Activated T-helper 1 cell treated with anti-CD3 and anti-CD28 coated beads, Interleukin-12 subunit alpha, Interleukin-12 subunit beta, Interleukin-2, Interleukin-4 antibody, amounts not matched to agents 30 ng/mL and 10 ng/mL and 1 ng/mL, durations not matched to agents 14 hours and 24 hours and 36 hours (primary cell): ENCODE measurements at regions of chr20 and their contacts with region 1.

Region 1: DNA sequence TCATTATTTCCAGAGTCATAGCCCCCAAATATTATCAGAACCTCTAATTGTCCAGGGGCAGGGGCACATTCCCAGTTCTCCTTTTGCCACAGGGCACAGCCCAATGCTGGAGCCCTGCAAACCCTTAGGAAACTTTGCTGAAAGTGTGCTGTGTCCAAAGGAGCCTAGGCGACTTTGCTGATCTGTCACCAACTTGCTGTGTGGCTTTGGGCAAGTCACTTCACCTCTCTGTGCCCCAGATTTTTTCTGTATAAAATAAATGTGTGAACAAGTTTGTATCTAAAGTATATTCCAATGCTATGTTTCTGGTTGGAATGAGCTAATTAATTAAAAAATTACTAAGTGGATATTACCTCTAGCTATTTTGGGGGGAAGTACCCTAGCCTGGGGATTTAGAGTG is 25.4 kb upstream of the BCAS1 start:
- DNase-seq: no peak
- H3K4me3 Mint-ChIP-seq: no peak overlapping the region
- H3K27ac Mint-ChIP-seq: no peak overlapping the region
- H3K4me1 Mint-ChIP-seq: peaks cover 9% of the 10 kb centered on the region
- H3K27me3 Mint-ChIP-seq: peaks cover 13% of the 10 kb centered on the region

Region 2: GRCh38 chr20:54199721-54200176 is 103.9 kb after region 1 on chr20:
- intact Hi-C with region 1: loop called (anchors 1 kb)
- DNase-seq: peak; percentile 44
- H3K4me3 Mint-ChIP-seq: no peak overlapping the region
- H3K27ac Mint-ChIP-seq: no peak overlapping the region
- H3K4me1 Mint-ChIP-seq: no peaks in the 10 kb centered on the region
- H3K27me3 Mint-ChIP-seq: peaks cover 5% of the 10 kb centered on the region

Region 3: DNA sequence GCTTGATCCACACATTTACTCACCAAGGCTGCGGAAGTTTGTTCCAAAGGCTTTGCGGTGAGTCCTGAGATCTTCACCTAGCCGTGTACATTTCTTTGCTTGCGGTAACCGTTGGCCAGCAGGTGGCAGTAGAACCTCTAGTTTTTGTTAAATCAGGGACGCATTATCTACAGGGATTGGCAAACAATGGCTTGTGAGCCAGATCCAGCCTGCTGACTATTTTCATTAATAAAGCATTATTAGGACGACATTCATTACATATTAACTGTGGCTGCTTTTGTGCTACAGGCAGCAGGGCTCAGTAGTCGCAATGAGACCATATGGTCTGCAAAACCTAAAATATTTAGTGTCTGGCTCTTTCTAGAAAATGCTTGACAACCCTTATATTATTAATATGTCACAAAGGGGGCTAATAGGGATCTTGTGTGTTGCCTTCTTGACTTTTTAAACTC is 553.7 kb after region 1 on chr20:
- intact Hi-C with region 1: loop called (anchors 1 kb)
- DNase-seq: peak; percentile 26
- H3K4me3 Mint-ChIP-seq: no peak overlapping the region
- H3K27ac Mint-ChIP-seq: no peak overlapping the region
- H3K4me1 Mint-ChIP-seq: no peaks in the 10 kb centered on the region
- H3K27me3 Mint-ChIP-seq: peaks cover 6% of the 10 kb centered on the region